ENCODE measurements at regions of chrX and their contacts with region 1.

Region 1: DNA sequence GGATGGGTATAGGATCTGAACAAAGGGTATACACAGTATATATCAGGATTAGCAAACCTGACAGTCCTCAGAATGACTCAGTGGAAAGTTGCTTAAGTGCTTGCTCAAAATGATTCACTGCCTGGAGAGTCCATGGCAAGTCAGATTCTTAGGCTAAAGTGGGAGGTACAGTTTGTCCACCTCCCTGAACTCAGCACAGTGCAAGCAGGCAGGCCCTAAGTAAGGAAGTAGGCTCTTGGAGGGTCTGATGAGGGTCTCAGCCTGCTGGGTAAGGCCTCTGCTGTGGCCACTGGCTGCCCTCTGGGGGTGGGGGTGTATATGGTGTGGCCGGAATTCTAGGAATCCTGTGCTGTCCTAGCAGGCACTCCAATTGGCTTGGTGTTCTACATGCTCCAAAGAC is 54.3 kb downstream of the CHRDL1 start:
- DNase-seq: no peak
- H3K4me3 ChIP-seq: no peak overlapping the region
- H3K27ac ChIP-seq: no peak overlapping the region
- H3K4me1 ChIP-seq: no peaks in the 10 kb centered on the region
- H3K27me3 ChIP-seq: peaks cover 0 to 57% of the 10 kb centered on the region in 2 donors
- CTCF ChIP-seq: no peak
- POLR2A ChIP-seq: no peak

Region 2: GRCh38 chrX:110806145-110806544 is 64.8 kb after region 1 on chrX:
- intact Hi-C with region 1: loop called (anchors 2 kb)
- DNase-seq: peak in 1 of 2 donors; percentile 17
- H3K4me3 ChIP-seq: no peak overlapping the region
- H3K27ac ChIP-seq: no peak overlapping the region
- H3K4me1 ChIP-seq: no peaks in the 10 kb centered on the region
- H3K27me3 ChIP-seq: peaks cover 0 to 82% of the 10 kb centered on the region in 2 donors
- CTCF ChIP-seq: no peak
- POLR2A ChIP-seq: no peak

Measured in breast epithelium (tissue), 4 donors.